Activated T-helper 1 cell treated with anti-CD3 and anti-CD28 coated beads, Interleukin-12 subunit alpha, Interleukin-12 subunit beta, Interleukin-2, Interleukin-4 antibody, amounts not matched to agents 30 ng/mL and 10 ng/mL and 1 ng/mL, durations not matched to agents 14 hours and 24 hours and 36 hours (primary cell): ENCODE measurements at regions of chr3 and their contacts with region 1.

Region 1: DNA sequence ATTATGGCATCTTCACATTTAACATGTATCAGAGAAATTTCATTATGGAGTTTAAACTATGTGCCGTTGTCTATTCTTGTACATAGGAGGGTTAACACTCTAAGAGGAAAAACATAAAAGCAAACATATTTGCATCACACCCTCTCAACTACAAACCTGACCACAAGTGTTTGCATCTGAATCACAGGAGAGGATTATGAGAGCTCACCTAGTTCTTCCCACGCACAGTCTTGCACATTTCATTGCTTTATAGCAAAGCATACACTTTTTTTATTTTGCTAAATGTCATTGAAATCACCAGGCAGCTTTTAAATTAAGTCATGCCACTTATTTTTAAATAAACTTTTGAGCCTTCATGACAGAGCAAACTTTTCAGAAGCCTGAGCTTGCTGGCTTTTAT is 12.5 kb downstream of the TRAT1 start:
- DNase-seq: peak; percentile 47
- H3K4me3 Mint-ChIP-seq: peak overlapping the region; percentile 86
- H3K27ac Mint-ChIP-seq: peak overlapping the region; percentile 99
- H3K4me1 Mint-ChIP-seq: peaks cover 92% of the 10 kb centered on the region
- H3K27me3 Mint-ChIP-seq: no peaks in the 10 kb centered on the region

Region 2: DNA sequence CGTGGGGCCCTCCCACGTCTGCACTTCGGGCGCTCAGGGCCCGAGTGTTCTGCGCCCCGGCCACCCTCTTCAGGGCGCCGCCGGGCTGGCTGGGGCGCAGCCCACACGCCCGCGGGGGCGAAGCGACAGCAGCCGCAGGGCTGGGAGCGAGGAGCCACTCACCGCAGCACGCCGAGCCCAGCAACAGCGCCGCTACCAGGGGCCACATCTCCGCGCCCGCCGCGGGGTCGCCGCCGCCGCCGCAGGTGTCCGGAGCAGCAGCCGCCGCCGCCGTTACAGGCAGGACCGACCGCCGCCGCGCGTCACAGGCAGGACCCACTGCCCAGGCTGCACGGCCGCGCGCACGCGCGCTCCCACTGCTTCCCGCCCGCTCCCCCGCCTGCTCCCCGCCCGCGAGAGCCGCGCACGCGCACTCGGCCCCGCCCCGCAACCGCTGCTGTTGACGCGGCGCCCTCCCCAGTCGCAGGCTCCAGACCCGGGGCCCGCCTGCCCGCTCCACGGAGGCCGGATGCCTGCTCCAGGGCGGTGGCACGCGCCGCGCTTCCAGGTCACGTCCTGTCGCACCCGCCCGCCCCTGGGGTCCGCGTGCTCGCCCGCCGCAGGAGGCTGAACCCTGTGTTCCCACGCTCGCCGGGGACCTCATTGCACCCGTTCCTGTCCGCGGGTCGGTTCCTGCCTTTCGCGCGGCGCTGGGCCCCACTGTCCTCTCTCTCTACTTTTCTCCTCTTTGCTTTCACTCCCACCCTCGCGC is 744.2 kb before region 1 on chr3 and contains the start of gene CD47:
- intact Hi-C with region 1: loop called (anchors 2 kb)
- DNase-seq: peak; percentile 93
- H3K4me3 Mint-ChIP-seq: peak within 1 kb of the TSS; percentile 95
- H3K27ac Mint-ChIP-seq: peak within 1 kb of the TSS; percentile 99
- H3K4me1 Mint-ChIP-seq: peaks cover 23% of the 10 kb centered on the region
- H3K27me3 Mint-ChIP-seq: peaks cover 7% of the 10 kb centered on the region
- total RNA-seq, gene CD47: 98.3 and 105 TPM in 2 replicates

Region 3: GRCh38 chr3:108292905-108293328 is 542.2 kb before region 1 on chr3:
- intact Hi-C with region 1: loop called (anchors 1 kb)
- DNase-seq: no peak
- H3K4me3 Mint-ChIP-seq: peak overlapping the region; percentile 53
- H3K27ac Mint-ChIP-seq: peak overlapping the region; percentile 83
- H3K4me1 Mint-ChIP-seq: peaks cover 64% of the 10 kb centered on the region
- H3K27me3 Mint-ChIP-seq: peaks cover 2% of the 10 kb centered on the region

Region 4: GRCh38 chr3:108505811-108506210 is 329.3 kb before region 1 on chr3:
- intact Hi-C with region 1: no loop called
- DNase-seq: no peak
- H3K4me3 Mint-ChIP-seq: no peak overlapping the region
- H3K27ac Mint-ChIP-seq: no peak overlapping the region
- H3K4me1 Mint-ChIP-seq: no peaks in the 10 kb centered on the region
- H3K27me3 Mint-ChIP-seq: peaks cover 8% of the 10 kb centered on the region

Region 5: GRCh38 chr3:108667312-108667711 is 167.8 kb before region 1 on chr3:
- intact Hi-C with region 1: loop called (anchors 1 kb)
- DNase-seq: no peak
- H3K4me3 Mint-ChIP-seq: no peak overlapping the region
- H3K27ac Mint-ChIP-seq: peak overlapping the region; percentile 36
- H3K4me1 Mint-ChIP-seq: peaks cover 33% of the 10 kb centered on the region
- H3K27me3 Mint-ChIP-seq: no peaks in the 10 kb centered on the region

Region 6: DNA sequence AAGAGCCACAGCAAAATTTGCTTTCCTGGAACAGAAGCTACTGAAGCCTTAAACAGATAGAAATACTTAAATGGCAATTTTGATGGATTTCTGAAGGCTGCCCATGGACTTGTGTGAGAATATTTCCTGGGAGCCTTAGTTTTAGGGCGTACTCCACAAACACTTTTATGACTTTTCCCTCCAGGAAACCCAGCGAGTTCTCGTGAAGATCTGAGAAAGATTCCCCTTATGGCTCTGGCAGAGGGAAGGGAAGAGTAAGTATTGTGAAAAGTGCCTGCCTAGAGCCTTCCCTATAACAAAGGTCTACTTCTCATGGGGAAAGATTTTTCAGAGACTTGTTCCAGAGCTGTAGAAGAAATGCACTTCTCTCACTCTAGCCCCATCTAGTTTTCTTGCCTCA is 43.6 kb before region 1 on chr3:
- intact Hi-C with region 1: no loop called
- DNase-seq: no peak
- H3K4me3 Mint-ChIP-seq: no peak overlapping the region
- H3K27ac Mint-ChIP-seq: no peak overlapping the region
- H3K4me1 Mint-ChIP-seq: no peaks in the 10 kb centered on the region
- H3K27me3 Mint-ChIP-seq: peaks cover 8% of the 10 kb centered on the region

Region 7: GRCh38 chr3:108845709-108846293 is 10.7 kb after region 1 on chr3:
- intact Hi-C with region 1: loop called (anchors 1 kb)
- DNase-seq: no peak
- H3K4me3 Mint-ChIP-seq: peak overlapping the region; percentile 48
- H3K27ac Mint-ChIP-seq: peak overlapping the region; percentile 59
- H3K4me1 Mint-ChIP-seq: peaks cover 84% of the 10 kb centered on the region
- H3K27me3 Mint-ChIP-seq: no peaks in the 10 kb centered on the region

Region 8: DNA sequence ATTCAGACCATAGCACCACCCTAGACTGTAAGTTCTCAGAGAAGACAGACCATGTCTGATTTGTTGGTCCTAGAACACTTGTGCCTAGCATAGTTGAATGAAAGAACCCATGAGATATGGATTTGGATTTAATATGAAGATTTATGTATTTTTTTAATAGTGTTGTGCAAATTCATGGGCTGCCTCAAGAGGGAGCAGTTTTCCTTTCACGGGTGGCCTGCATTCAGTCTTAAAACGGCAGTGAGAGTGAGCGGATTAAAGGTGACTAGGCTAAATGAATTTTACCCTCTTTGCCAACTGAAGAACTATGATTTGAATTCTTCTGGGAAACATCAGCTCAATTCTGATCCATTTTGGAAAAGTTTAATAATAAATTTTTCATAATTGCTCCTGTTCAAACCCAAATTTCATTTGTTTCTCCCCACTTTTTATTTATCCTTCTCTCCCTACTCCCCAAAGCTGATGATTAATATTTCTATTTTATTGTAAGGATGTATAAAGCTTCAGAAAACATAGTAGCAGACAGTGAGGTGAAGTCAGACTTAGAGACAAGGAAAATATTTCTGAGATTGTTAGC is 215.6 kb after region 1 on chr3:
- intact Hi-C with region 1: no loop called
- DNase-seq: no peak
- H3K4me3 Mint-ChIP-seq: no peak overlapping the region
- H3K27ac Mint-ChIP-seq: no peak overlapping the region
- H3K4me1 Mint-ChIP-seq: no peaks in the 10 kb centered on the region
- H3K27me3 Mint-ChIP-seq: peaks cover 7% of the 10 kb centered on the region

Region 9: DNA sequence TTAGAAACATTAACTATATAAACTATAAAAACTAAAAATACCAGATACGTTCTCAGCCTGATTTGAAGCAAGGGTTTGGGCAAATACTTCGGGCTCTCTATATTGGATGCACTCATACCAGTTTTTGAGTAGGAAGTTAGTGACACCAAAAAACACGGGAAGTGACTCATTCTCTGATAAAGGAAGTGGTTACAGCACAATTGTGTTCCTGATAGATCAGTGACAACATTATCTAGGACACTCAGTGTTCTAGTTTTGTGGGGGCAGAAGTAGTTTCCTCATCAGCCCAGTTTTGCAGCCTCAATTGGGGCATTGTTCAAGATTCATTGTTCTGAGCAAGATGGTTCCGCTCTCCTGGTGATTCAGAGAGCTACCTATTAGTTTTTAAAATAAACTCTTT is 971.8 kb after region 1 on chr3:
- intact Hi-C with region 1: loop called (anchors 10 kb)
- DNase-seq: peak; percentile 30
- H3K4me3 Mint-ChIP-seq: peak overlapping the region; percentile 35
- H3K27ac Mint-ChIP-seq: peak overlapping the region; percentile 67
- H3K4me1 Mint-ChIP-seq: peaks cover 39% of the 10 kb centered on the region
- H3K27me3 Mint-ChIP-seq: peaks cover 8% of the 10 kb centered on the region